ENCODE measurements at regions of chr3 and their contacts with region 1.

Region 1: GRCh38 chr3:16928386-16929132 is 43.8 kb downstream of the PLCL2 start:
- DNase-seq: no peak
- ATAC-seq: peak; percentile 69
- H3K4me3 ChIP-seq: 0 out of 2 replicates have a peak overlapping the region, but pooled peaks have one; percentile 4
- H3K27ac ChIP-seq: peak overlapping the region; percentile 63
- H3K4me1 ChIP-seq: peaks cover 66% of the 10 kb centered on the region
- H3K27me3 ChIP-seq: no peaks in the 10 kb centered on the region
- CTCF ChIP-seq: no peak
- EP300 ChIP-seq: no peak
- POLR2A ChIP-seq: no peak
- RAD21 ChIP-seq: no peak

Region 2: DNA sequence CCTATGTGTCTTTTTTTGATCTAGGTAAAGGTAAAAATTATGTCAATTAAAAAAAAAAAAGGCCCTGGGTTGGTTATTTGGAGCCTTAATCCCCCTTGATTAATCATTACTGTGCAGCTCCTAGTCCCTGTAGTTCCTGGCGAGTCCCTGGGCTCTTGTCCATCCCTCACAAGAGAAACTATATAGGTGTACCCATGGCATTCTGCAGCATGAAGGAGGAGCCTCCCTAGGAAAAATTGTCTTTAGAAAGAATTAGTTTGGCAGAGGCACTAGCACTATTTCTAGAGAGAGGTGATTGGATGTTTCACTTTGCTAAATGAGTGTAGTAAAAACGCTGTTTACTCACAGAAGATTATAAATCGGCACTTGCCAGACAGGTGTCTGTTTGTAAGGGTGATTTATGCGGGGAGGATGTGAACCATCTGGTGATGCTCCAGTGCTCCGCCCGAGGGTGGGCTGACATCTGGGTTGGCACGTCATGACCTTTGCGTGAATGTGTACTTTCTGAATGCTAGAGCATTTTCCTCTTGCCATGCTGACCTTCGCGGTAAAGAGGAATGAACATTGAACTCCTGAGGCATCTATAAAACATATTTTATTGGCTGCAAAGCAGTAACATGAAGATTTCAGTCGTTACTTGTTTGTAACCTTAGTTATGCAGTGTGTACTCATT is 31.2 kb before region 1 on chr3:
- CTCF ChIA-PET with region 1: interaction called, 5 read pairs
- POLR2A ChIA-PET with region 1: interaction called, 4 read pairs
- RAD21 ChIA-PET with region 1: interaction called, 9 read pairs
- SMC1A ChIA-PET with region 1: interaction called, 10 read pairs
- in situ Hi-C with region 1: no loop called
- intact Hi-C with region 1: no loop called
- DNase-seq: peak; percentile 52
- ATAC-seq: peak; percentile 79
- H3K4me3 ChIP-seq: peak overlapping the region; percentile 47; the same call in 1 of the 2 replicates
- H3K27ac ChIP-seq: peak overlapping the region; percentile 79
- H3K4me1 ChIP-seq: peaks cover 26% of the 10 kb centered on the region
- H3K27me3 ChIP-seq: no peaks in the 10 kb centered on the region
- CTCF ChIP-seq: no peak
- EP300 ChIP-seq: peak in 1 of 2 experiments; percentile 47; a peak in 1 of 4 replicates
- POLR2A ChIP-seq: no peak
- RAD21 ChIP-seq: no peak

Region 3: GRCh38 chr3:16912400-16913263 is 15.9 kb before region 1 on chr3:
- CTCF ChIA-PET with region 1: interaction called, 52 read pairs
- POLR2A ChIA-PET with region 1: interaction called, 12 read pairs
- RAD21 ChIA-PET with region 1: interaction called, 34 read pairs
- SMC1A ChIA-PET with region 1: interaction called, 51 read pairs
- in situ Hi-C with region 1: no loop called
- intact Hi-C with region 1: no loop called
- DNase-seq: peak; percentile 90
- ATAC-seq: peak; percentile 92
- H3K4me3 ChIP-seq: peak overlapping the region; percentile 27
- H3K27ac ChIP-seq: peak overlapping the region; percentile 99
- H3K4me1 ChIP-seq: peaks cover 49% of the 10 kb centered on the region
- H3K27me3 ChIP-seq: no peaks in the 10 kb centered on the region
- CTCF ChIP-seq: no peak
- EP300 ChIP-seq: peak; percentile 91 to 96
- POLR2A ChIP-seq: no peak
- RAD21 ChIP-seq: no peak

Region 4: GRCh38 chr3:17006132-17006852 is 77.7 kb after region 1 on chr3:
- CTCF ChIA-PET with region 1: interaction called, 3 read pairs
- POLR2A ChIA-PET with region 1: no interaction called
- RAD21 ChIA-PET with region 1: interaction called, 3 read pairs
- SMC1A ChIA-PET with region 1: interaction called, 4 read pairs
- in situ Hi-C with region 1: no loop called
- intact Hi-C with region 1: loop called (anchors 5 kb)
- DNase-seq: no peak
- ATAC-seq: peak; percentile 72
- H3K4me3 ChIP-seq: no peak overlapping the region
- H3K27ac ChIP-seq: no peak overlapping the region
- H3K4me1 ChIP-seq: peaks cover 9% of the 10 kb centered on the region; the same call in 1 of the 2 replicates
- H3K27me3 ChIP-seq: no peaks in the 10 kb centered on the region
- CTCF ChIP-seq: no peak
- EP300 ChIP-seq: no peak
- POLR2A ChIP-seq: no peak
- RAD21 ChIP-seq: no peak

Region 5: DNA sequence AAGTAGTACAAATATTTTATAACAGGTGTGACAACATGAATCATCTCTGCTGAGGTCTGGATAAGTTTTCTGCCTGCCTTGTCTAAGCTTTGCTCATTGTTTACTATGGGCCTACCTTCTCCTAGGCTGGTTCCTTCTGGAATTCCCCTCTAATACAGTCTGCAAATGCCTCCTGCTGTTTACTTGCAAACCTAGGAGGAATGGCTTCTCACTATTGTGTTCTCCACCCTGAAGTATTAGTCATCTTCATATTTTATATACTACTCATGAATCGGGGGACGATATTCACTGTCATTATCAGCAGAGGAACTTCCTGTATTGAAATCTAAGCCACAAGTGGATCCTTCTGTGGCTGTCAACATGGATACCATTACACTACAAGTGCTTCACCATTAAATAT is 111.0 kb after region 1 on chr3:
- CTCF ChIA-PET with region 1: interaction called, 5 read pairs
- POLR2A ChIA-PET with region 1: no interaction called
- RAD21 ChIA-PET with region 1: interaction called, 11 read pairs
- SMC1A ChIA-PET with region 1: interaction called, 9 read pairs
- in situ Hi-C with region 1: no loop called
- intact Hi-C with region 1: no loop called
- DNase-seq: no peak
- ATAC-seq: peak; percentile 52
- H3K4me3 ChIP-seq: no peak overlapping the region
- H3K27ac ChIP-seq: peak overlapping the region; percentile 42; the same call in 1 of the 2 replicates
- H3K4me1 ChIP-seq: peaks cover 21% of the 10 kb centered on the region
- H3K27me3 ChIP-seq: no peaks in the 10 kb centered on the region
- CTCF ChIP-seq: no peak
- EP300 ChIP-seq: no peak
- POLR2A ChIP-seq: no peak
- RAD21 ChIP-seq: no peak

Measured in GM12878 (cell line).